ENCODE measurements at regions of chr2 and their contacts with region 1.

Region 1: DNA sequence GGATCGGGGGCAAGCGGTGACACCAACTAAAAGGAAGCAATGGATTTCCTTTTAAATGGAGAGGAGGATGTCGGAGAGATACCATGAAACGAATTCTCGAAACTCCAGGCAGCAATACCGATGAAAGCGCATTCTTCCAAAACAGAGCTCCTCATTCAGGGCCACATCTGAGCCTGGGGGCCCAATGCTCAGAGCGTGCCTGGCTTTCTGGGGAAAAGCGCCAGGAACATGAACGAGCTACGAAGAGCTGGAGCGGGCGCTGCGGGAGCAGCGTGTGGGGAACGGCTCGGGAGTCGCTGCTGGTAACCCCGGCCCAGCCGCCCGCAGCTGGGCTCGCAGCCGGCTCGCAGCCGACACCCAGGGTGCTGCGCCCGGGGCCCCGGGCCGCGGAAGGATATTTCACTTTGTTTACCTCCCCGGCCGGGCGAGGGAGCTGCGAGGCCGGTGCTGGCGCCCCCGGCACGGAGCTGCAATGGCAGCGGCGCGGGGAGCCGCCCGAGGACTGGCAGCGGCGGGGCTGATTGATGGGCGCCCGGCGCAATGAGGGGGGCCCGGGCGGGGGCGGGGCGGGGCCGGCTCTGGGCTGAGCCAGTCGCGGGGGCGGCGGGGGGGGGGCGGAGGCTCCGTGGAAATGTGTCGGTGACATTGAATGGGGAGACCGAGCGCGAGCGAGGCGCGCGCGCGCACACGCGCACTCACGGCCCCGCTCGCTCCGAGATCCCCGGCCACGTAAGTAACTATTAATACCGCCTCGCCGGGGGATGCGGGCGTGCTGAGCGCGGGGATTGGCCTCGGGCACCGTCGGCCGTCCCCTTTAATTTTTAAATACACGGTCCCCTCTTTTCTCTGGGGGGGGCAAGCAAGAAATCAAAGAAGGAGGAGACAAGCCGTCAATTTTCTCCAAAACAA is at the start of gene TRIB2:
- DNase-seq: peak; percentile 95
- ATAC-seq: peak; percentile 92
- H3K4me3 ChIP-seq: peak within 1 kb of the TSS; percentile 93
- H3K27ac ChIP-seq: peak within 1 kb of the TSS; percentile 90
- H3K4me1 ChIP-seq: peaks cover 19% of the 10 kb centered on the region
- H3K27me3 ChIP-seq: no peaks in the 10 kb centered on the region
- CTCF ChIP-seq: no peak
- total RNA-seq, gene TRIB2: 50.7 TPM

Region 2: GRCh38 chr2:11863513-11864328 is 852.8 kb before region 1 on chr2:
- intact Hi-C with region 1: loop called (anchors 10 kb)
- DNase-seq: peak; percentile 88
- ATAC-seq: peak; percentile 96
- H3K4me3 ChIP-seq: no peak overlapping the region
- H3K27ac ChIP-seq: no peak overlapping the region
- H3K4me1 ChIP-seq: peaks cover 14% of the 10 kb centered on the region
- H3K27me3 ChIP-seq: no peaks in the 10 kb centered on the region
- CTCF ChIP-seq: peak; percentile 96

Region 3: DNA sequence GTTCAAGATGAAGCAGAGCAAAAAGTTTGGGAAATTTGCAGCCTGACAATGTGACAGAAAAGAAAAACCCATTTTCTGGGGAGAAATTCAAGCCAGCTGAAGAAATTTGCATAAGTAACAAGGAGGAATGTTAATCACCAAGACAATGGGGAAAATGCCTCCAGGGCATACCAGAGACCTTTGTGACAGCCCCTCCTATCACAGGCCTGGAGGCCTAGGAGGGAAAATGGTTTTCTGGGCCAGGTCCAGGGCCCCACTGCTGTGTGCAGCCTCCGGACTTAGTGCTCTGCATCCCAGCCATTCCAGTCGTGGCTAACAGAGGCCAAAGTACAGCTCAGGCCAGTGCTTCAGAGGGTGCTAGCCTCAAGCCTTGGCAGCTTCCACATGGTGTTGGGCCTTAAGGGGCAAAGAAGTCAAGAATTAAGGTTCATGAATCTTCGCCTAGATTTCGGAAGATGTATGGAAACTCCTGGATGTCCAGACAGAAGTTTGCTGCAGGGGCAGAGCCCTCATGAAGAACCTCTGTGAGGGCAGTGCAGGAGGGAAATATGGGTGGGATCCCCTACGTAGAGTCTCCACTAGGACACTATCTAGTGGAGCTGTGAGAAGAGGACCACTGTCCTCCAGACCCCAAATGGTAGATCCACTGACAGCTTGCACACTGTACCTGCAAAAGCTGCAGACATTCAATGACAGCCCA is 313.9 kb before region 1 on chr2:
- intact Hi-C with region 1: no loop called
- DNase-seq: no peak
- ATAC-seq: no peak
- H3K4me3 ChIP-seq: no peak overlapping the region
- H3K27ac ChIP-seq: no peak overlapping the region
- H3K4me1 ChIP-seq: no peaks in the 10 kb centered on the region
- H3K27me3 ChIP-seq: no peaks in the 10 kb centered on the region
- CTCF ChIP-seq: no peak

Region 4: GRCh38 chr2:12928197-12928774 is 211.8 kb after region 1 on chr2:
- intact Hi-C with region 1: loop called (anchors 5 kb)
- DNase-seq: no peak
- ATAC-seq: no peak
- H3K4me3 ChIP-seq: no peak overlapping the region
- H3K27ac ChIP-seq: no peak overlapping the region
- H3K4me1 ChIP-seq: no peaks in the 10 kb centered on the region
- H3K27me3 ChIP-seq: no peaks in the 10 kb centered on the region
- CTCF ChIP-seq: no peak